ENCODE measurements at regions of chr2 and their contacts with region 1.

Region 1: GRCh38 chr2:223465793-223466192 is 136.4 kb downstream of the SCG2 start:
- DNase-seq: peak; percentile 64 to 92
- ATAC-seq: peak; percentile 95 to 99
- H3K4me3 ChIP-seq: no peak overlapping the region
- H3K27ac ChIP-seq: peak overlapping the region; percentile 19 to 58 (median 42)
- H3K4me1 ChIP-seq: peaks cover 0 to 4% of the 10 kb centered on the region in 2 donors
- H3K27me3 ChIP-seq: no peaks in the 10 kb centered on the region
- CTCF ChIP-seq: no peak
- POLR2A ChIP-seq: no peak

Region 2: GRCh38 chr2:222993920-222994650 is 471.7 kb before region 1 on chr2:
- in situ Hi-C with region 1: no loop called
- intact Hi-C with region 1: loop called (anchors 10 kb)
- DNase-seq: peak; percentile 89 to 90
- ATAC-seq: peak; percentile 99
- H3K4me3 ChIP-seq: peak overlapping the region in 2 of 4 donors; percentile 38 to 47
- H3K27ac ChIP-seq: peak overlapping the region; percentile 73 to 89 (median 80)
- H3K4me1 ChIP-seq: peaks cover 5 to 18% of the 10 kb centered on the region in 2 donors
- H3K27me3 ChIP-seq: no peaks in the 10 kb centered on the region
- CTCF ChIP-seq: no peak
- POLR2A ChIP-seq: no peak

Region 3: GRCh38 chr2:223051693-223052289 is 414.0 kb before region 1 on chr2 and contains the start of gene KCNE4:
- in situ Hi-C with region 1: no loop called
- intact Hi-C with region 1: loop called (anchors 10 kb)
- DNase-seq: no peak
- ATAC-seq: peak in 1 of 2 donors; percentile 34
- H3K4me3 ChIP-seq: peak within 1 kb of the TSS; percentile 39 to 63 (median 50)
- H3K27ac ChIP-seq: peak within 1 kb of the TSS; percentile 76 to 81 (median 77)
- H3K4me1 ChIP-seq: peaks cover 5 to 6% of the 10 kb centered on the region in 2 donors
- H3K27me3 ChIP-seq: peaks cover 12 to 27% (median 26%) of the 10 kb centered on the region in 3 donors
- CTCF ChIP-seq: no peak
- POLR2A ChIP-seq: peak; percentile 41 to 63
- total RNA-seq, gene KCNE4: 2.0 to 6.1 (median 3.3) TPM

Region 4: GRCh38 chr2:223580951-223581350 is 115.2 kb after region 1 on chr2:
- in situ Hi-C with region 1: no loop called
- intact Hi-C with region 1: loop called (anchors 10 kb)
- DNase-seq: no peak
- ATAC-seq: peak; percentile 83 to 93
- H3K4me3 ChIP-seq: peak overlapping the region in 3 of 4 donors; percentile 12 to 38 (median 19)
- H3K27ac ChIP-seq: no peak overlapping the region
- H3K4me1 ChIP-seq: peaks cover 6 to 13% of the 10 kb centered on the region in 2 donors
- H3K27me3 ChIP-seq: no peaks in the 10 kb centered on the region
- CTCF ChIP-seq: no peak
- POLR2A ChIP-seq: no peak

Measured in gastrocnemius medialis (tissue), 4 donors.